ENCODE measurements at regions of chr16 and their contacts with region 1.

Region 1: GRCh38 chr16:29910819-29911675 is 10.8 kb downstream of the ASPHD1 start:
- DNase-seq: no peak
- H3K4me3 ChIP-seq: no peak overlapping the region
- H3K27ac ChIP-seq: no peak overlapping the region
- H3K4me1 ChIP-seq: no peaks in the 10 kb centered on the region
- H3K27me3 ChIP-seq: no peaks in the 10 kb centered on the region
- CTCF ChIP-seq: no peak
- EP300 ChIP-seq: no peak
- POLR2A ChIP-seq: no peak

Region 2: GRCh38 chr16:29790183-29790952 is 120.7 kb before region 1 on chr16 and contains the start of gene KIF22:
- intact Hi-C with region 1: no loop called
- DNase-seq: peak; percentile 99 to 100 (median 99)
- H3K4me3 ChIP-seq: peak within 1 kb of the TSS; percentile 62
- H3K27ac ChIP-seq: peak within 1 kb of the TSS; percentile 44 to 78
- H3K4me1 ChIP-seq: peaks cover 14% of the 10 kb centered on the region
- H3K27me3 ChIP-seq: no peaks in the 10 kb centered on the region
- CTCF ChIP-seq: peak; percentile 74 to 96 (median 90)
- EP300 ChIP-seq: no peak
- POLR2A ChIP-seq: peak; percentile 48
- total RNA-seq, gene KIF22: 15.9 to 31.0 (median 20.7) TPM

Region 3: GRCh38 chr16:29873319-29873718 is 37.7 kb before region 1 on chr16:
- intact Hi-C with region 1: loop called in 1 of 4 experiments (anchors 5 kb)
- DNase-seq: no peak
- H3K4me3 ChIP-seq: no peak overlapping the region
- H3K27ac ChIP-seq: no peak overlapping the region
- H3K4me1 ChIP-seq: no peaks in the 10 kb centered on the region
- H3K27me3 ChIP-seq: no peaks in the 10 kb centered on the region
- CTCF ChIP-seq: no peak
- EP300 ChIP-seq: no peak
- POLR2A ChIP-seq: no peak